ENCODE measurements at regions of chr10 and their contacts with region 1.

Region 1: DNA sequence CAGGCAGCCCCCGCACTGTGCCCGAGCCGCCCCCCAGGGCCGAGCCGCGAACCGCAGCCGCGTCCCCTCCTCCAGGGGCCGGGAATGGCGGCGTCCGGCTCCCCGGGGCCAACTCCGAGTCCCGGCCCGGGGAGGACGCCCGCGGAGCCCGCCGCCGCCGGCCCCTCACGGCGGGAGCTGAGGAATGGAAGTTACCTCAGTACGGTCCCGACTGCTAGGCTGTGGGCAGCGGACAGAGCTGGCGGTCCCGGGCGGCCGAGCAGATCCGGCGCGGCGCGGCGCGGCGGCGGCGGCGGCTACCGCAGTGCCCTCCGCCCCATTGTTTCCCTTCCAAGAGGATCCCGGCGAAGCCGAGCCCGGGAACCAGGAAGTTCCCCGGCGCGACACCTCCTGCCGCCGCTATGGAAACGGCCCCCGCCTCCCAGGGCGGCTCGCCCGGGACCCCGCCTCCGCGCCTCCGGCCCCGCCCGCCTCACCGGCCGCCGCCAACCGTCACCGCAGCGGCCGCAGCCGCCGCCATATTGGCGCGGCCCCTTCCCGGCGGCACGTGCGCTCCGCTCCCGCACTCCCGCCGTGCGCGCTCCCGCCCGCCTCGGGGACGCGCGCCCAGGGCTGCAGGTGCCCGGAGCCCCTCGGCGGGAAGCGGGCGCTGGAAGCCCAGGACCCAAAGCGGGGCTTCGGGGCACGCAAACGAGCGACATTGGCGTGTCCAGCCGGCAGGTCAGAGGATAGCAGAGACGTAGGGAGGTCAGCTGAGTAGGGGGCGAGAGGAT is at the start of gene USP6NL:
- DNase-seq: peak; percentile 85
- CTCF ChIP-seq: no peak

Region 2: GRCh38 chr10:11663763-11664555 is 52.5 kb after region 1 on chr10:
- in situ Hi-C with region 1: loop called (anchors 10 kb)
- DNase-seq: peak; percentile 61
- CTCF ChIP-seq: peak; percentile 10

Region 3: DNA sequence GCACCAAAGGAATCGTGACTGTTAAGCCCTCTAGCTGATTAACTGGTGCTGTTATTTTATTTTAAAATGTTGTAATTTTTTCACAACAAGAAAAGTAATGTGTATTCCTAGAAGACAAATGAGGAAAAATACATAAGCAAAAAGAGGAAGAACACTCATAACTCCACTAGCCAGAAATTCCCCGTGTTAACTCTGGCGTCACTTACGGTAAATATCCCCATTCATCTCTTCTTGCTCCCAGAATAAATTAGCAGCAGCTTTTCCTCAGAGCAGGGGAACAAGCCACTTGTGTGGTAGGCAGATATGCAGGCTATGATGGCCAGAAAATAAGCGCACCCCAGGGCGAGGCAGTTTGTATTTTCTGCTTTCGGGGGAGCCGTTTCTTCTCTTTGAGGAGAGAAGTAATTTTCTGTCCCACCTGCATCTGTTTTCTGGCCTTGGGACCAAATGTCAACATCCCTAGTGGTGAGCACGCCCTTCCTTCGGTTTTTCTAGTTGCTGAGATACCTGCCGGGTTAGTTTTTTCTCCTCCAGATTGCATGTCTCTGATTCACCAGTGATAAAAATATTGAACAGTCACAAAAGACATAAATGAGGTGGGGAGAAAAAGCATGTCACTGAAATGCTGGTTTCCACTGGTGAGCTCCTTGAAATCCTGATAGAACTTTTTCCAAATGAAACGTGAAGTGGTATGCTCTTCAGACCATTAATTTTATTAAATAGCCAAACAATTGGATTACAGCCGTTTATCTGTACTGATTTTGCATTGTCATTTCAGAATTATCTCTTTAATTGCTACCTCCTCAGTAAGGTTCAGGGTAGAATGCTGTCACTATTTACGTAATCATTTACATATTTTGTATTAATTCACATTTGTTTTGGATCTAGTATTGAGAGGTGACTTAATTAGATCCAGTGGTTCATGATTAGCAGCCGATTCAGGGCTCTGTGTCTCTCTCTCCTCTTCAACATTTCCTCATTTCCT is 1006.0 kb after region 1 on chr10:
- in situ Hi-C with region 1: no loop called
- DNase-seq: peak; percentile 29
- CTCF ChIP-seq: no peak

Measured in GM13977 (cell line).